IMR-90 (cell line): ENCODE measurements at regions of chr4 and their contacts with region 1.

Region 1: DNA sequence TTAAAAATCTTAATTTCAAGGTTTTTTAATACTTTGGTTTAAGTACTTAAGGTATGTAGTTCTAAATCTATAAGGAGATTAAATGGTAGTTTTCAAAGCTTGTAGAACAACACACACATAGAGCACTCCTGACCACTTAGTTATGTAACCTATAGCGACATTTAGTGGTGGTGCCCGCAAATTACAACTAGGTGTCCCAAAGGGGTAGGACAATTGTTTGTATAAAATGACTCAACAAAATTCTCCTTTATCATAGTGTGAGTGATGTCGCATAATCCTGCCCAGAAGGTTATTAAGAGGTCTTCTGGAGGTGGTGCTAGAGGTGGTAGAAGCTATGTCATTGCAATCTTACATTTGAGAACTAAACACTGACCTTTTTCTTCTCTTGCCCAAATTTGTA is 373.0 kb upstream of the RASGEF1B start:
- DNase-seq: peak; percentile 57
- ATAC-seq: peak; percentile 97
- H3K4me3 ChIP-seq: no peak overlapping the region
- H3K27ac ChIP-seq: no peak overlapping the region
- H3K4me1 ChIP-seq: no peaks in the 10 kb centered on the region
- H3K27me3 ChIP-seq: no peaks in the 10 kb centered on the region
- CTCF ChIP-seq: peak; percentile 76
- POLR2A ChIP-seq: no peak
- RAD21 ChIP-seq: peak; percentile 74

Region 2: DNA sequence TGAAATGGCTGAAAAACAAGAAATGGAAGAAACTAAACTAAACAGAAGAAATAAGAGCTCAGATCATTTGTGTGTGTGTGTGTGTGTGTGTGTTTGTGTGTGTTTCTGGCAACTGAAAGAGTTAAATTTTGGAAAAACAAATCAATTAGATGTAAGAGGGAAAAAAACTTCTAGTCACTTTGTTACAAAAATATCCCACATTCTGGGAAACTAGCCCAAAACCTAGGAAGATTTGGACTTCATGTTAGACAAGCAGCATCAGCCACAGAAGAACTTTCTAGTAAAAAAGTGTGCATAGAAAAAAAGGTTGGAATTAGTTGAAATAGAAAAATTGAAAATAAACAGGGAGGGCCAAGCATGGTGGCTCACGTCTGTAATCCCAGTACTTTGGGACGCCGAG is 518.1 kb before region 1 on chr4:
- CTCF ChIA-PET with region 1: no interaction called
- POLR2A ChIA-PET with region 1: no interaction called
- dilution Hi-C with region 1: no loop called
- in situ Hi-C with region 1: no loop called
- intact Hi-C with region 1: no loop called
- DNase-seq: no peak
- ATAC-seq: no peak
- H3K4me3 ChIP-seq: no peak overlapping the region
- H3K27ac ChIP-seq: no peak overlapping the region
- H3K4me1 ChIP-seq: no peaks in the 10 kb centered on the region
- H3K27me3 ChIP-seq: no peaks in the 10 kb centered on the region
- CTCF ChIP-seq: no peak
- POLR2A ChIP-seq: no peak
- RAD21 ChIP-seq: no peak

Region 3: DNA sequence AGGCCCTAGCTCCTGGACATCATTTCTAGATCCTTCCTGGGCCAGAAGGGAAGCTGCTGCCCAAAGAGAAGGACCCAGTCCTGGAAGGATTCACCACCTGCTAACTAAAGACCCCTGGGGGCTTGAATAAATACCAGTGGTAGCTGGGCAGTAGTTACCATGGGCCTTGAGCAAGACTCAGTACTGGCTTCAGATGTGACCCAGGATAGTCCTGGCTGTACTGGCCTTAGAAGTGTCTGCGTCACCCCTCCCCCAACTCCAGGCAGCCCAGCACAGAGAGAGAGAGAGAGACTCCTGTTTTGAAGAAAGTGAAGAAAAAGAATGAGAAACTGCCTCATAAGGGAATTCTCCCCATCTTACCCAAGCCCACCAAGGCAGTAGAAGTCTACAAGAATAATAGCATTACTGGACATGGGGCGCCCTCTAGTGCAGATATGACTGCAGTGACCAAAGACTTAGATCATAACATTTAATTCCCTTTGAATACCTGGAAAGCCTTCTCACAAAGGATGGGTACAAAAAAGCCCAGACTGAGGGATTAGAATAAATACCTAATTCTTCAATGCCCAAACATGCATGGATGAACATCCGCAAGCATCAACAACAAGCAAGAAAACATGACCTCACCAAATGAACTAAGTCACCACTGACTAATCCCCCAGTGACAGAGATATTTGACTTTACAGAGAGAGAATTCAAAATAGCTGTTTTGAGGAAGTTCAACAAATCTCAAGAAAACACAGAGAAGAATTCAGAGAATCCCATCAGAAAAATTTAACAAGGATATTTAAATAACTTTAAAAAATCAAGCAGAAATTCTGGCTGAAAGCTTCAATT is 357.3 kb after region 1 on chr4:
- CTCF ChIA-PET with region 1: no interaction called
- POLR2A ChIA-PET with region 1: no interaction called
- dilution Hi-C with region 1: no loop called
- in situ Hi-C with region 1: no loop called
- intact Hi-C with region 1: loop called (anchors 2 kb)
- DNase-seq: peak; percentile 27
- ATAC-seq: peak; percentile 46; the same call in 1 of the 2 replicates
- H3K4me3 ChIP-seq: no peak overlapping the region
- H3K27ac ChIP-seq: no peak overlapping the region
- H3K4me1 ChIP-seq: no peaks in the 10 kb centered on the region
- H3K27me3 ChIP-seq: no peaks in the 10 kb centered on the region
- CTCF ChIP-seq: peak; percentile 61
- POLR2A ChIP-seq: no peak
- RAD21 ChIP-seq: peak; percentile 80

Region 4: GRCh38 chr4:82268050-82268825 is 423.5 kb after region 1 on chr4:
- CTCF ChIA-PET with region 1: no interaction called
- POLR2A ChIA-PET with region 1: no interaction called
- dilution Hi-C with region 1: no loop called
- in situ Hi-C with region 1: no loop called
- intact Hi-C with region 1: loop called (anchors 5 kb)
- DNase-seq: peak; percentile 50
- ATAC-seq: peak; percentile 99
- H3K4me3 ChIP-seq: no peak overlapping the region
- H3K27ac ChIP-seq: no peak overlapping the region
- H3K4me1 ChIP-seq: no peaks in the 10 kb centered on the region
- H3K27me3 ChIP-seq: peaks cover 3% of the 10 kb centered on the region; the same call in 1 of the 2 replicates
- CTCF ChIP-seq: peak; percentile 70
- POLR2A ChIP-seq: no peak
- RAD21 ChIP-seq: peak; percentile 67